Psoas muscle (tissue), 8 donors: ENCODE measurements at regions of chr18 and their contacts with region 1.

Region 1: DNA sequence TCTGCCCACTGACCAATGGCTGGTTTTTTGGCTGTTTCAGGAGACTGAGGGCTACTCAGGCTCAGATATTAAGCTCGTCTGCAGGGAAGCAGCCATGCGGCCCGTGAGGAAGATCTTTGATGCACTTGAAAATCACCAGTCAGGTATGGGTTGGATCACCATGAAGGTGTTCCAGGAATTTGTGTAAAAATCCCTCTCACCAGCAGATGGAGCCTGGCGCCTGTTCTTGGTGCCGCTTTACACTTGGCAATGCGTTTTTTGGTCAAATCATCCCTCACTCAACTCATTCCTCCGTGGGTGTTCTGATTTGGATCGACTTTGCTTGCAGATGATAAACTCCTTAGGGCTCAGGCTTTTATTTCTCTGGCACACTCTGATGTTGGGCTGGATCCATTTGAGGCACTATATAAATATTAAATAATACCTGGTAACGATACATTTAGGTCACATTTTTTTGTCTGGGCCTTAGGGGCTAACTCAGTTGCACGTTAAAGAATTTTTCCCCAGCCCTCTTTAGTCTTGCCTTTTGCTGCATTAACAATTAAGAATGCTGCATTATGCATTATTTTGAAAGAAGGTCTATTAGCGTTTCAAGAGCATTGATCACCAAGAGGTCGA is 50.0 kb downstream of the HDHD2 start:
- DNase-seq: peak in 1 of 2 donors; percentile 24
- ATAC-seq: peak in 3 of 4 donors; percentile 68 to 86 (median 80)
- H3K4me3 ChIP-seq: no peak overlapping the region
- H3K27ac ChIP-seq: no peak overlapping the region
- H3K4me1 ChIP-seq: no peaks in the 10 kb centered on the region
- H3K27me3 ChIP-seq: no peaks in the 10 kb centered on the region
- CTCF ChIP-seq: peak; percentile 76

Region 2: GRCh38 chr18:47204908-47205522 is 104.7 kb after region 1 on chr18:
- intact Hi-C with region 1: loop called (anchors 1 to 5 kb)
- DNase-seq: no peak
- ATAC-seq: peak in 3 of 4 donors; percentile 54 to 71 (median 55)
- H3K4me3 ChIP-seq: no peak overlapping the region
- H3K27ac ChIP-seq: no peak overlapping the region
- H3K4me1 ChIP-seq: no peaks in the 10 kb centered on the region
- H3K27me3 ChIP-seq: peaks cover 0 to 2% (median 0%) of the 10 kb centered on the region in 3 donors
- CTCF ChIP-seq: peak; percentile 85